ENCODE measurements at regions of chr12 and their contacts with region 1.

Region 1: GRCh38 chr12:80195074-80195726 is 95.9 kb downstream of the OTOGL start:
- DNase-seq: peak; percentile 71
- ATAC-seq: peak; percentile 78
- H3K4me3 ChIP-seq: no peak overlapping the region
- H3K27ac ChIP-seq: no peak overlapping the region
- H3K4me1 ChIP-seq: no peaks in the 10 kb centered on the region
- H3K27me3 ChIP-seq: no peaks in the 10 kb centered on the region
- CTCF ChIP-seq: peak; percentile 79

Region 2: GRCh38 chr12:79187032-79187431 is 1008.2 kb before region 1 on chr12:
- CTCF ChIA-PET with region 1: no interaction called
- POLR2A ChIA-PET with region 1: no interaction called
- intact Hi-C with region 1: no loop called
- DNase-seq: no peak
- ATAC-seq: no peak
- H3K4me3 ChIP-seq: no peak overlapping the region
- H3K27ac ChIP-seq: no peak overlapping the region
- H3K4me1 ChIP-seq: no peaks in the 10 kb centered on the region
- H3K27me3 ChIP-seq: no peaks in the 10 kb centered on the region
- CTCF ChIP-seq: no peak

Region 3: DNA sequence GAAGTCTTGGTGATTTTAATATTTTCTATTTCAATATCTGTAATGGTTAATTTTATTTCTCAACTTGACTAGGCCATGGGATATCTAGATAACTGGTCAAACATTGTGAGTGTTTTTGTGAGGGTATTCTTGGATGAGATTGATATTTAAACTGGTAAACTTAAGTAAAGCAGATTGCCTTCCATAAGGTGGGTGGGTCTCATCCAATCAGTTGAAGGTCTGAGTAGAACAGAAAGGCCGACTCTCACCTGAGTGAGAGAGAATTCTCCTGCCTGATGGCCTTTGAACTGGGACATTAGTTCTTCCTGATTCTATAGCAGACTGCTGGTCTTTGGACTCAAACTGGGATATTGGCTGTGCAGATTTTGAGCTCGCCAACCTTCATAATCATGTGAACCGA is 59.6 kb before region 1 on chr12:
- CTCF ChIA-PET with region 1: no interaction called
- POLR2A ChIA-PET with region 1: no interaction called
- intact Hi-C with region 1: no loop called
- DNase-seq: no peak
- ATAC-seq: no peak
- H3K4me3 ChIP-seq: no peak overlapping the region
- H3K27ac ChIP-seq: no peak overlapping the region
- H3K4me1 ChIP-seq: no peaks in the 10 kb centered on the region
- H3K27me3 ChIP-seq: no peaks in the 10 kb centered on the region
- CTCF ChIP-seq: no peak

Region 4: DNA sequence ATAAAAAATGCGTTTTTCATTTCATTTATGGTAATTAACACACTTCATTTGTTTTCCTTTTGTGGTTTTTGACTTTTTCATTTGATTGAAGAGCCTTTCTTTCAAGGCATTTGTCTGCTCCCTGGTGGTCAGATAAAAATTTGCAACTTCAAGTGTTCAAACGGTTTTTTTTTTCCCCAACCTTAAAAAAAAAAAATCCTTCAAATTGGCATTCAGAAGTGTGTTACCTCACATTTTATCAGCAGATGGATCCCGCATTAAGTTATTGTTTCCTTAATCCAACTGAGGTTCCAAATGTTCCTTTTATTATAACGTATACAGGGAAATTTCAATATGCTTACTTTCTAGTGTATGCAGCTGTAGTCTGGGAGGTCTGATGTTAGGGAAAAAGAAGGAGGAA is 568.7 kb after region 1 on chr12:
- CTCF ChIA-PET with region 1: no interaction called
- POLR2A ChIA-PET with region 1: no interaction called
- intact Hi-C with region 1: loop called (anchors 2 kb)
- DNase-seq: peak; percentile 60
- ATAC-seq: no peak
- H3K4me3 ChIP-seq: no peak overlapping the region
- H3K27ac ChIP-seq: no peak overlapping the region
- H3K4me1 ChIP-seq: no peaks in the 10 kb centered on the region
- H3K27me3 ChIP-seq: peaks cover 28% of the 10 kb centered on the region
- CTCF ChIP-seq: peak; percentile 78

Region 5: GRCh38 chr12:81257947-81258551 is 1062.8 kb after region 1 on chr12:
- CTCF ChIA-PET with region 1: interaction called, 5 read pairs
- POLR2A ChIA-PET with region 1: no interaction called
- intact Hi-C with region 1: loop called (anchors 10 kb)
- DNase-seq: peak; percentile 66
- ATAC-seq: no peak; the same call in 1 of the 2 replicates
- H3K4me3 ChIP-seq: no peak overlapping the region
- H3K27ac ChIP-seq: no peak overlapping the region
- H3K4me1 ChIP-seq: no peaks in the 10 kb centered on the region
- H3K27me3 ChIP-seq: peaks cover 4% of the 10 kb centered on the region
- CTCF ChIP-seq: peak; percentile 76

Measured in PC-3 (cell line).